Naive thymus-derived CD4-positive, alpha-beta T cell (primary cell): ENCODE measurements at regions of chr1 and their contacts with region 1.

Region 1: GRCh38 chr1:42576935-42577334 is 81.3 kb upstream of the PPIH start:
- DNase-seq: no peak
- ATAC-seq: no peak
- H3K4me3 ChIP-seq: no peak overlapping the region
- H3K4me3 Mint-ChIP-seq: no peak overlapping the region
- H3K27ac ChIP-seq: no peak overlapping the region
- H3K27ac Mint-ChIP-seq: no peak overlapping the region
- H3K4me1 ChIP-seq: no peaks in the 10 kb centered on the region
- H3K4me1 Mint-ChIP-seq: peaks cover 0 to 4% (median 0%) of the 10 kb centered on the region in 7 donors
- H3K27me3 ChIP-seq: no peaks in the 10 kb centered on the region
- H3K27me3 Mint-ChIP-seq: peaks cover 0 to 8% (median 0%) of the 10 kb centered on the region in 5 donors

Region 2: DNA sequence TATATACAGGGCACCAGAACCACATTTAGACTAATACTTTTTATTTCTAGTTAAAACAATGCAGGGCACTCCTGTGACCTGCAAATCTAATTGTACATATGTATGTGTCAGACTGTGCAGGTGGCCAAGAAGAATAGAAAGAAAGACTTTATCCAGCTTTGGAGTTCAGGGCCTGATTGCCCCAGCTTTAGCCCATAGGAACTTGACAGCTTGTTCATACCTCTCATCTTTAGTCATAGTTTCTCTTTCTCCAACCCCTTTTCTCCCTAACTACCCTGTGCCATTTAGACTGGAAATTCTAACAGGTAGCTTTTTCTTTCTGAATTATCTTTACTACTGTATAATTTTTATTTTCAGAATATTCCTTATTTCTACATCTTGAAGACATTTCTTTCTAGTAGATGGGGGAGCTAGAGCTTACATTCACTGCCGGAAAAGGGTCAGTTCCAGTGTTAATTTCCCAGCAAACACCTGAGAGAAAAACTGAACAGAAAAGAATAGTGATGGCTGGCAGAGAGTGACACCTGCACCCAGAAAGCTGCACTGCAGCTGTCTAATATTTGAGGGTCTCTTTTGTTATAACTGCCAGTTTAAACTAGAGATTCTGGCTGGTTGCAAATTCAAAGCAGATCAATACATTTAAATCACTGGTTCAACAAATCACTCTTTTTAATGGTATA is 113.7 kb after region 1 on chr1:
- CTCF ChIA-PET with region 1: interaction called, 3 read pairs
- POLR2A ChIA-PET with region 1: no interaction called
- intact Hi-C with region 1: loop called in 1 of 2 experiments (anchors 1 kb)
- DNase-seq: no peak
- ATAC-seq: peak; percentile 30
- H3K4me3 ChIP-seq: no peak overlapping the region
- H3K4me3 Mint-ChIP-seq: peak overlapping the region in 6 of 10 donors; percentile 2 to 36 (median 20)
- H3K27ac ChIP-seq: no peak overlapping the region
- H3K27ac Mint-ChIP-seq: peak overlapping the region in 6 of 9 donors; percentile 4 to 70 (median 30)
- H3K4me1 ChIP-seq: peaks cover 57 to 65% of the 10 kb centered on the region in 2 donors
- H3K4me1 Mint-ChIP-seq: peaks cover 53 to 96% (median 88%) of the 10 kb centered on the region in 7 donors
- H3K27me3 ChIP-seq: no peaks in the 10 kb centered on the region
- H3K27me3 Mint-ChIP-seq: no peaks in the 10 kb centered on the region

Region 3: DNA sequence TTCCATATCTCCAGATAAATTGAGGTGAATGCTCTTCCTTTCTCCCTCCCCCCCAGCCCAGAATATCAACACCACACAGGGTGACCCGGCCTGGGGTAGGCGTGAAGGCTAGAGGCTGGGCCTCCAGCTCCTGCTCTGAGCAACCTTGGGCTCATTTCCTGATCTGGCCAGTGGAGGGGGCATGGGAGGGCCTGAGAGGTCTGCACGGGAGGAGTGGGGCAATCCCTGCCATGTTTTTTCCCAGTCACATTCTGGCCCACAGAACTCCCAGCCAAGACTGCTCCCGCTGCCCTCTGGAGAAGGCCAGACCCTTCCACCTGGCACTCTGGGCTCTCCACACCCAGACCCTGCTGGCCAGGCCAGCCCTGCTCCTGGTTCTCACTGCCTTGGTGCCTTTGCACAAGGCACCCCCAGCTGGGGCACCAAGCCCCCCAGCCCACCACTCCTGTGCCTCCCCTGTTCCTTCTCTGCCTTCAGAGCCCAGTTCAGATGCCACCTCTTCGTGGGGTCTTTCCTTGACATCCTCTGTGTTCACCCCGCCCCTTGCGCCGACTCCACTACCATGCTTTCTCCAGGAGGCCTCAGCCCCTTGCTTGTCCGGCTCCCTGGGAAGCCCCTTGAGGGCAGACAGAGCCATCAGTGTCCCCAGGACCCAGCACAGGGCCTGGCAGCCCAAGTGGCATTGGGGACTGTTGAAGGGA is 159.4 kb after region 1 on chr1:
- CTCF ChIA-PET with region 1: no interaction called
- POLR2A ChIA-PET with region 1: no interaction called
- intact Hi-C with region 1: loop called in 1 of 2 experiments (anchors 2 kb)
- DNase-seq: no peak
- ATAC-seq: peak; percentile 28
- H3K4me3 ChIP-seq: no peak overlapping the region
- H3K4me3 Mint-ChIP-seq: no peak overlapping the region
- H3K27ac ChIP-seq: no peak overlapping the region
- H3K27ac Mint-ChIP-seq: peak overlapping the region in 2 of 9 donors; percentile 0 to 10
- H3K4me1 ChIP-seq: no peaks in the 10 kb centered on the region
- H3K4me1 Mint-ChIP-seq: peaks cover 5 to 11% (median 10%) of the 10 kb centered on the region in 7 donors
- H3K27me3 ChIP-seq: no peaks in the 10 kb centered on the region
- H3K27me3 Mint-ChIP-seq: no peaks in the 10 kb centered on the region

Region 4: DNA sequence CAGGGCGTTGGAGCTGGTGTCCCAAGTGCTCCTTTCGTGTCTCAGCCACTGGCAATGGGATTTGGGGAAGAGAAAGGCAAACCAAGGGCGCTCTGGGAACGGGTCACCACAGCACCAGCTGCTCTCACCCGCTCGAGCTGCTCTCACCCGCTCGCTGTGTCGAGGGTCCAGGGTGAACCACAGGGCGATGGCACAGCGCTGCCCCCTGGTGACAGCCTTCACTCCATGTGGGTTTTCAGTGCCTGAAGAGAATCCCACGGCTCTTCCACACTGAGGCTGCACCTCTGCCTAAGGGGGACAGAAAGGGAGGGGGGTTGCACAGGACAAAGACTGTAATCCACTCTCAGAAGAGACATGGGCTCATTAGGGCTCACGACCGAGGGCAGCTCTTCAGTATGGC is 170.2 kb after region 1 on chr1:
- CTCF ChIA-PET with region 1: interaction called, 18 read pairs
- POLR2A ChIA-PET with region 1: no interaction called
- intact Hi-C with region 1: loop called (anchors 1 kb)
- DNase-seq: peak in 6 of 9 donors; percentile 19 to 56 (median 38)
- ATAC-seq: peak; percentile 73
- H3K4me3 ChIP-seq: no peak overlapping the region
- H3K4me3 Mint-ChIP-seq: no peak overlapping the region
- H3K27ac ChIP-seq: no peak overlapping the region
- H3K27ac Mint-ChIP-seq: peak overlapping the region in 1 of 9 donors; percentile 28
- H3K4me1 ChIP-seq: no peaks in the 10 kb centered on the region
- H3K4me1 Mint-ChIP-seq: peaks cover 0 to 3% (median 0%) of the 10 kb centered on the region in 7 donors
- H3K27me3 ChIP-seq: no peaks in the 10 kb centered on the region
- H3K27me3 Mint-ChIP-seq: no peaks in the 10 kb centered on the region

Region 5: DNA sequence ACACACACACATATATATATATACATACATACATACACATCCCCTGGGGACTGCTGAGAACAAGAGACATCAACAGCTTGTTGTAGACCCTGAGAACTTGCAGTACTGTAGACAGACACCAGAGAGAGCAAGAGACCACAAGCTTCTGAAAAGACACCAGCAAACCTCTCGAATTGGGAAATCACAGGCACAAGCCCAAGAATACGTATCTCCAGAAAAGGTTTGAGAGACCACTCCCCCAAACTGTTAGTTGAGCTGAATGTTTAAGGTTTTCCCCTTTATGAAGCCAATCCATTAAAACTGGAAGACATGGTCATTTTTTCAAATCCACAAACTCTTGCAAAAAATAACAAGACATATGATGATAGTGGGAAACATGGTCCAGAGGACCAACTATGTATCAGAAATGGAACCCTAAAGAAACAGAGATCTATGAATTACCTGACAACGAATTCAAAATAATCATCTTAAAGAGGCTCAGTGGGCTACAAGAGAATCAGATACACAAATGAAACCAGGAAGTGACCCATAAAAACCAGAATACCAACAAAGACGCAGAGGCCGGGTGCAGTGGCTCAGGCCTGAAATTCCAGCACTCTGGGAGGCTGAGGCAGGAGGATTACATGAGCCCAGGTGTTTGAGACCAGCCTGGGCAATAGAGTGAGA is 336.6 kb after region 1 on chr1:
- CTCF ChIA-PET with region 1: interaction called, 3 read pairs
- POLR2A ChIA-PET with region 1: no interaction called
- intact Hi-C with region 1: loop called in 1 of 2 experiments (anchors 2 kb)
- DNase-seq: peak in 7 of 9 donors; percentile 54 to 84 (median 76)
- ATAC-seq: peak; percentile 94
- H3K4me3 ChIP-seq: no peak overlapping the region
- H3K4me3 Mint-ChIP-seq: no peak overlapping the region
- H3K27ac ChIP-seq: no peak overlapping the region
- H3K27ac Mint-ChIP-seq: no peak overlapping the region
- H3K4me1 ChIP-seq: no peaks in the 10 kb centered on the region
- H3K4me1 Mint-ChIP-seq: peaks cover 0 to 5% (median 4%) of the 10 kb centered on the region in 7 donors
- H3K27me3 ChIP-seq: no peaks in the 10 kb centered on the region
- H3K27me3 Mint-ChIP-seq: peaks cover 0 to 8% (median 0%) of the 10 kb centered on the region in 5 donors

Region 6: GRCh38 chr1:43073490-43074230 is 496.7 kb after region 1 on chr1:
- CTCF ChIA-PET with region 1: interaction called, 13 read pairs
- POLR2A ChIA-PET with region 1: no interaction called
- intact Hi-C with region 1: loop called (anchors 1 kb)
- DNase-seq: peak; percentile 46 to 80 (median 69)
- ATAC-seq: peak; percentile 90
- H3K4me3 ChIP-seq: no peak overlapping the region
- H3K4me3 Mint-ChIP-seq: no peak overlapping the region
- H3K27ac ChIP-seq: no peak overlapping the region
- H3K27ac Mint-ChIP-seq: peak overlapping the region in 2 of 9 donors; percentile 33 to 89
- H3K4me1 ChIP-seq: no peaks in the 10 kb centered on the region
- H3K4me1 Mint-ChIP-seq: peaks cover 0 to 11% (median 6%) of the 10 kb centered on the region in 7 donors
- H3K27me3 ChIP-seq: no peaks in the 10 kb centered on the region
- H3K27me3 Mint-ChIP-seq: peaks cover 0 to 8% (median 0%) of the 10 kb centered on the region in 5 donors

Region 7: DNA sequence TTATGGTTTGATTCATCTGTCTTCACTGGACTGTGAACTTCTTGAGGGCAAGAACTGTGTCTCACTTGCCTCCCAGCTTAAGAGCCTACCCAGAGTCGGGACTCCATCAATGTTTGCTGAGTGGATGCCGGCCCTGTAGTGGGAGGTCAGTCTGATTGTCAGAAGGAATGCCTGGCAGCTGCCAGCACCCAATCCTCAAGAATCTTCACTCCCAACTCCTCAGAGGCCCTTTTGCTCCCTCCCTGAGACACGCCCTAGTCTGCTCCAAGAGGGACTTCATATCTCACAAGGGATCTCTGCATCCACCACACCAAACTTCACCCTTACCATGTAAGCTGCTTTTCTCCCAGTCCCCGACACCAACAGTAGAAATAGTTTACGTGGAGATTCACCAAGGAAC is 1057.8 kb after region 1 on chr1:
- CTCF ChIA-PET with region 1: no interaction called
- POLR2A ChIA-PET with region 1: no interaction called
- intact Hi-C with region 1: no loop called
- DNase-seq: no peak
- ATAC-seq: no peak
- H3K4me3 ChIP-seq: no peak overlapping the region
- H3K4me3 Mint-ChIP-seq: no peak overlapping the region
- H3K27ac ChIP-seq: no peak overlapping the region
- H3K27ac Mint-ChIP-seq: no peak overlapping the region
- H3K4me1 ChIP-seq: no peaks in the 10 kb centered on the region
- H3K4me1 Mint-ChIP-seq: no peaks in the 10 kb centered on the region
- H3K27me3 ChIP-seq: no peaks in the 10 kb centered on the region
- H3K27me3 Mint-ChIP-seq: peaks cover 0 to 7% (median 0%) of the 10 kb centered on the region in 5 donors